Calu3 (cell line): ENCODE measurements at regions of chr18 and their contacts with region 1.

Region 1: DNA sequence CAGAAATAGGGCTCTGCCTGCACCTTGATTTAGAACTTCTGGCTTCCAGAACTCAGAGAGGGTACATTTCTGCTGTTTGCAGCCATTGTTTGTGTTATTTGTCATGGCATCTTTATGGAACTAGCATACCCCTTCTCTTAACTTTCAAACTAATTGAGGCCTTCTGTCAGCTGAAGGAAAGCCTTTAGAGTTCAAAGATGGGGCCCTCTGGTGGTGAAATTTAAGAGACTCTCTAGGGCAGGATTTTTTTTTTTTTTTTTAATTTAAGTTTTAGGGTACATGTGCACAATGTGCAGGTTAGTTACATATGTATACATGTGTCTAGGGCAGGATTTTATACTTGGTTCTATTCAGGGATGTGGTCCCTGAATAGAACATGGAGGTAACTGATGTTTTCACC is 260.6 kb upstream of the LINC00305 start:
- DNase-seq: peak; percentile 22
- H3K4me3 Mint-ChIP-seq: no peak overlapping the region
- H3K27ac Mint-ChIP-seq: no peak overlapping the region
- H3K4me1 Mint-ChIP-seq: no peaks in the 10 kb centered on the region
- H3K27me3 Mint-ChIP-seq: no peaks in the 10 kb centered on the region
- CTCF ChIP-seq: peak; percentile 27

Region 2: DNA sequence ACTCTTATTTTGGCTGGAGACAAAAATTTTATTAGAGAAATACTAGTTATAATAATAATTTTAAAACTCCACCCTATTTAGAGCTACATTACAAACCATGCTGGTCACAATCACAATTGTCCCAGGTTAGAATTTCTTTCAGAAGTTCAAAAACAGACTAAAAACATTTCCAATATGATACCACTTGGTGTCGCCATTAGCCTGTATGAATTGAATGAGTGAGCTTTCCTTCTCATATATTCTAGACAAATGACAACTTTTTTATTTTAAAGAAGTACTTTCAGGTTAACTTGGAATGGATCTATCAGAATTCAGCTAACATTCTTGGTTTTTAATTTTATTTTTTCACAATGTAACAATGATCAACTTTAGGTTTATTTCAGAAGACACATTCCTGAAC is 391.6 kb before region 1 on chr18:
- CTCF ChIA-PET with region 1: interaction called, 7 read pairs
- intact Hi-C with region 1: loop called (anchors 2 kb)
- DNase-seq: no peak
- H3K4me3 Mint-ChIP-seq: no peak overlapping the region
- H3K27ac Mint-ChIP-seq: no peak overlapping the region
- H3K4me1 Mint-ChIP-seq: peaks cover 22% of the 10 kb centered on the region
- H3K27me3 Mint-ChIP-seq: no peaks in the 10 kb centered on the region
- CTCF ChIP-seq: no peak

Region 3: GRCh38 chr18:64037812-64038414 is 371.6 kb before region 1 on chr18:
- CTCF ChIA-PET with region 1: interaction called, 9 read pairs
- intact Hi-C with region 1: loop called (anchors 5 kb)
- DNase-seq: no peak
- H3K4me3 Mint-ChIP-seq: no peak overlapping the region
- H3K27ac Mint-ChIP-seq: no peak overlapping the region
- H3K4me1 Mint-ChIP-seq: no peaks in the 10 kb centered on the region
- H3K27me3 Mint-ChIP-seq: no peaks in the 10 kb centered on the region
- CTCF ChIP-seq: peak; percentile 61

Region 4: GRCh38 chr18:64100116-64100922 is 309.2 kb before region 1 on chr18:
- CTCF ChIA-PET with region 1: no interaction called
- intact Hi-C with region 1: loop called (anchors 5 kb)
- DNase-seq: no peak
- H3K4me3 Mint-ChIP-seq: peak overlapping the region; percentile 22
- H3K27ac Mint-ChIP-seq: no peak overlapping the region
- H3K4me1 Mint-ChIP-seq: peaks cover 11% of the 10 kb centered on the region
- H3K27me3 Mint-ChIP-seq: no peaks in the 10 kb centered on the region
- CTCF ChIP-seq: no peak

Region 5: DNA sequence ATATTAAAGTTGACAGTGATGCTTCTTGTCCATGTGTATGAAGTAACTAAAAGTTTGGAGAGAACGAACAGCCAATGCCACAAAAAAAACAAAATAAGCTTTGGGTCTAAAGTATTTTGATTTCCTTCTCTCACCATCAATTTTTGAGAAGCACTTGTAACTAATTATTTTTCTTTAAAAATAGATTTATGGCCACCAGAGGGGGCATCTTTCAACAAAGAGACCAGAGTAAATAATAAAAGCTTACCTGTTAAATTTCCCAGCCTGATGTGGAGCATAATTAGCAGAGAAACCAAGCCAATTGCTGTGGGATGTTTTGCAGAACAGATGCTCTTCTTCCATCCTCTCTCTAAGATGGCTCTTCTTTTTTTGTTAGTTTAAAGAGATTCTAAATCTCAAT is 289.6 kb before region 1 on chr18:
- CTCF ChIA-PET with region 1: interaction called, 4 read pairs
- intact Hi-C with region 1: loop called (anchors 1 kb)
- DNase-seq: no peak
- H3K4me3 Mint-ChIP-seq: no peak overlapping the region
- H3K27ac Mint-ChIP-seq: no peak overlapping the region
- H3K4me1 Mint-ChIP-seq: no peaks in the 10 kb centered on the region
- H3K27me3 Mint-ChIP-seq: no peaks in the 10 kb centered on the region
- CTCF ChIP-seq: peak; percentile 33

Region 6: GRCh38 chr18:64372850-64373249 is 36.7 kb before region 1 on chr18:
- CTCF ChIA-PET with region 1: no interaction called
- intact Hi-C with region 1: no loop called
- DNase-seq: no peak
- H3K4me3 Mint-ChIP-seq: no peak overlapping the region
- H3K27ac Mint-ChIP-seq: no peak overlapping the region
- H3K4me1 Mint-ChIP-seq: peaks cover under 1% of the 10 kb centered on the region
- H3K27me3 Mint-ChIP-seq: no peaks in the 10 kb centered on the region
- CTCF ChIP-seq: no peak